ENCODE measurements at regions of chr20 and their contacts with region 1.

Region 1: GRCh38 chr20:40563296-40563944 is 125.6 kb downstream of the MAFB start:
- DNase-seq: peak; percentile 97
- H3K4me3 Mint-ChIP-seq: peak overlapping the region; percentile 2
- H3K27ac Mint-ChIP-seq: peak overlapping the region; percentile 81
- H3K4me1 Mint-ChIP-seq: peaks cover 40% of the 10 kb centered on the region
- H3K27me3 Mint-ChIP-seq: no peaks in the 10 kb centered on the region
- CTCF ChIP-seq: no peak

Region 2: GRCh38 chr20:40506567-40506966 is 56.9 kb before region 1 on chr20:
- CTCF ChIA-PET with region 1: interaction called, 3 read pairs
- POLR2A ChIA-PET with region 1: interaction called, 21 read pairs
- intact Hi-C with region 1: loop called (anchors 5 kb)
- DNase-seq: peak; percentile 99
- H3K4me3 Mint-ChIP-seq: no peak overlapping the region
- H3K27ac Mint-ChIP-seq: peak overlapping the region; percentile 74
- H3K4me1 Mint-ChIP-seq: peaks cover 41% of the 10 kb centered on the region
- H3K27me3 Mint-ChIP-seq: no peaks in the 10 kb centered on the region
- CTCF ChIP-seq: no peak

Region 3: DNA sequence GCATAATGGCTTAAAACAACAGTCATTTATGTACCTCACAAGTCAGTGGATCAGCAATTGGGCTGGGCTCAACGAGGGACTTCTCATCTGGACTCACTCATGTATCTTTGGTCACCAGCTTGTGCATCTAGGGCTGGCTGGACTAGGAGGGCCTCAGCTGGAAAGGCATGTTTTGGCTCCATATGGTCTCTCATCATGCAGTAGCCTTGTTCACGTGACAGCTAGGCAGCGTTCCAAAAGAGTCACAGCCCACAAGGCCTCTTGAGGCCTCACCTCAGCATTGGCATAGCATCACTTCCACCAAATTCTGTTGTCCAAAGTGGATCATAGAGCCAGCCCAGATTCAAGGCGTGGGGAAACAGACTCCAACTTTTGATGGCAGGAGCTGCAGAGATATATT is 15.5 kb after region 1 on chr20:
- CTCF ChIA-PET with region 1: interaction called, 15 read pairs
- POLR2A ChIA-PET with region 1: interaction called, 8 read pairs
- intact Hi-C with region 1: no loop called
- DNase-seq: no peak
- H3K4me3 Mint-ChIP-seq: no peak overlapping the region
- H3K27ac Mint-ChIP-seq: no peak overlapping the region
- H3K4me1 Mint-ChIP-seq: peaks cover 9% of the 10 kb centered on the region
- H3K27me3 Mint-ChIP-seq: no peaks in the 10 kb centered on the region
- CTCF ChIP-seq: no peak

Region 4: DNA sequence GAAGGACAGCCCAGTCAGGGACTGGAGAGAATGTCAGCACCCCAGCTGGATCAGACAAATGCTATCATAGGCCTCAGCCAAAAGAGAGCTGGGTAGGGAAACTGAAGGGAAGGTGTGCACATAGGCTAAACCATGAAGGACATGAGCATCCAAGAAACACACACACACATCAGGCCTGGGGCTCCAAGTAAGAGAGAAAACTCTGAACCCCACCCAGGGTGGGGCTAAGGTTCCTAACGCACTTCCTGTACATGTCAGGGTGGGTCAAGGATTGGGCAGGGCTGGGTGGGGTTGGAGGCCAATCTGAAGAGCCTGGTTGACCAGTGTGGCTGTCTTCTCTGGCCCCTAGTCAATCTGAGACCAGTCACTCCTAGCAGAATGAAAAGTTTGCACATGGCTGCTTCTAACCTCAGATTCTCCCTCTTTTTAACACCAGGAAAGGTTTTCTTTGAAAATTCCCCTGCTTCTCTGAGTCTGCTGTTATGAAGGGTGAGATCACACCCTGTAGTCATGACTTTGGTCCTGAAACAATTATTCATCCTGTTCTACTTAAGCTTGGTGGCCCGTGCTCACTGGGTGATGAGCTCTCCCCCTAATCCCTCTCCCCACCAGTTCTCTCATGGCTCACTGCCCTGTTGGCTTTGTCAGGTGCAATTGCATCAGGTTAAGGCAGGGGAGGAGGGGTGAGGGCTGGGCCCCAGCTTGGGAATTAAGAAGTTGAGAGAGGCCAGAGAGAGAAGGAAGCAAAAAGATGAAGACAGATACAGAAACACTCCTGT is 37.2 kb after region 1 on chr20:
- CTCF ChIA-PET with region 1: no interaction called
- POLR2A ChIA-PET with region 1: interaction called, 5 read pairs
- intact Hi-C with region 1: loop called (anchors 5 kb)
- DNase-seq: peak; percentile 57
- H3K4me3 Mint-ChIP-seq: no peak overlapping the region
- H3K27ac Mint-ChIP-seq: peak overlapping the region; percentile 83
- H3K4me1 Mint-ChIP-seq: peaks cover 7% of the 10 kb centered on the region
- H3K27me3 Mint-ChIP-seq: no peaks in the 10 kb centered on the region
- CTCF ChIP-seq: no peak

Region 5: DNA sequence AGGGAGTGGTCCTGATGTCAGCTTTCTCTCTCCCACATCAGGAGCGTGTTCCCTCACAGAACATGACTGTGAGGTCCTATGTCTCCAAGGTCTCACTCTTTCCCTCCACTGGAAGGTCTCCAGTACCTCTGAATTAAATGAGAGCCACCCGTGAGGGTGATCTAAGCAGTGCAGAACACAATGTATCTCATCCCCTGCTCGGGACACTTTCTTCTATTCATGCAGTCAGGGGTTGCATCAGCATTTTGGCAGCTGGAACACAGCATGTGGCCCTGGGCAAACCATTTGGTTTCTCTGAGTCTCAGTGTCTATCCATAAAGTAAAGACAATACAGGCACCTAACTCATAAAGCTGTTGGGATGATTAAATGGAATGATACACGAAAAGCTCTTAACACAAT is 91.5 kb after region 1 on chr20:
- CTCF ChIA-PET with region 1: interaction called, 3 read pairs
- POLR2A ChIA-PET with region 1: interaction called, 35 read pairs
- intact Hi-C with region 1: no loop called
- DNase-seq: peak; percentile 81
- H3K4me3 Mint-ChIP-seq: no peak overlapping the region
- H3K27ac Mint-ChIP-seq: peak overlapping the region; percentile 88
- H3K4me1 Mint-ChIP-seq: peaks cover 43% of the 10 kb centered on the region
- H3K27me3 Mint-ChIP-seq: no peaks in the 10 kb centered on the region
- CTCF ChIP-seq: no peak